ENCODE measurements at regions of chr4 and their contacts with region 1.

Region 1: GRCh38 chr4:87543835-87544461 is 14.8 kb upstream of the SPARCL1 start:
- DNase-seq: peak; percentile 32
- H3K4me3 ChIP-seq: no peak overlapping the region
- H3K27ac ChIP-seq: no peak overlapping the region
- H3K4me1 ChIP-seq: no peaks in the 10 kb centered on the region
- H3K27me3 ChIP-seq: no peaks in the 10 kb centered on the region
- CTCF ChIP-seq: peak in 3 of 4 experiments; percentile 44 to 62 (median 60)
- POLR2A ChIP-seq: no peak

Region 2: GRCh38 chr4:87375719-87376291 is 168.1 kb before region 1 on chr4:
- intact Hi-C with region 1: loop called (anchors 5 kb)
- DNase-seq: peak; percentile 42
- H3K4me3 ChIP-seq: no peak overlapping the region
- H3K27ac ChIP-seq: no peak overlapping the region
- H3K4me1 ChIP-seq: no peaks in the 10 kb centered on the region
- H3K27me3 ChIP-seq: no peaks in the 10 kb centered on the region
- CTCF ChIP-seq: peak in 3 of 4 experiments; percentile 62 to 76 (median 73)
- POLR2A ChIP-seq: no peak

Region 3: GRCh38 chr4:87430038-87430437 is 113.9 kb before region 1 on chr4:
- intact Hi-C with region 1: no loop called
- DNase-seq: no peak
- H3K4me3 ChIP-seq: no peak overlapping the region
- H3K27ac ChIP-seq: no peak overlapping the region
- H3K4me1 ChIP-seq: peaks cover 5% of the 10 kb centered on the region
- H3K27me3 ChIP-seq: no peaks in the 10 kb centered on the region
- CTCF ChIP-seq: no peak
- POLR2A ChIP-seq: no peak

Region 4: DNA sequence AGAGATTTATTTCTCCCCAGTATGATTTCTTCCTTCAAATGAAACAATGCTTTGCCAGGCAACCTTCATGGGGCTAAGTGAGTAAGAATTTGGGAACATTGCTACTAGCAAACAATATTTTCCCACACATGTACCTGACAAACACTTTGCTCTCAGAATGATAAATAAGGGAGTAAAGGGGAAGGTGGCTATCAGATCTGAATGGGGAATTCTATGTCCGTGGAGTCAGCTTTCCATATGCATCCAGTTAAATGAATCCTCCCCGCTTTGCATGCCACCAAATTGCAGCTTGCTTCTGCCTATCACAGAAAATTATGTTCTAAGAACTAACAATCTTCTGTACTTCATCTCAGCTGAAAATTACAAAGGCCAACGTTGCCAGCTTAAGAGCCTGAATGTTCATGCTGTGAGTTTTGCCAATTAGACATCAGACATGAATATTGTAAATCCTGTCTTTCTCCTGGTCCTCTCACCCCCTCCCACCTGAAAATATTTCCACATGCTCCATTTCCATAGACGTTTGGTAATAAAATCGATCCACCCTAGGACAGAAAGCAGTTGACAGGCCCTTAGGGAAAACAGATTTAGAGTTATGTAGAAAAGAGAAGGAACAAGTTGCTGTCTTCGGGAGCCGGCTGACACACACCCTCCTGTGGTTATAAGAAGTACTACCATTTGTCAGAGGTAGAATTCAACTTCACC is 295.1 kb after region 1 on chr4:
- intact Hi-C with region 1: loop called (anchors 2 kb)
- DNase-seq: no peak
- H3K4me3 ChIP-seq: no peak overlapping the region
- H3K27ac ChIP-seq: no peak overlapping the region
- H3K4me1 ChIP-seq: no peaks in the 10 kb centered on the region
- H3K27me3 ChIP-seq: no peaks in the 10 kb centered on the region
- CTCF ChIP-seq: peak; percentile 51 to 66 (median 58)
- POLR2A ChIP-seq: no peak

Region 5: DNA sequence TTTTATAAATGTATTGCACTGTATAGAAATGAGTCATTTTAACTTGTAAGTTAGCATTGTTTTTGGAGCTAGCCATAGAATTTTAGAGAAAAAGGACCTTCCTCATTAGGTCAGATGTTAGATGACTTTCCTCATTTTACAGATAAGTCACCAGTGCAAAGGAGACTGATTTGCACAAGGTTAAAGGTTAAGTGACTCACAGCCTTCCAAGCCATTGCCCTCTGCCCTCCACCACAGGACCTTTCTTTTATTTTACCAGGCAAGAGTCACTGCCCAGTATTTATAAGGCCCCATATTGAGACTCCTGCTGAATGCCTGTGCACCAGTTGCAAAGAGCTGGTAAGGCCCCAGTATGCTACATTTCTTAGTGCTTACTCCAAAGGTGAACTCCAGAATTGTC is 618.7 kb after region 1 on chr4:
- intact Hi-C with region 1: no loop called
- DNase-seq: no peak
- H3K4me3 ChIP-seq: no peak overlapping the region
- H3K27ac ChIP-seq: no peak overlapping the region
- H3K4me1 ChIP-seq: no peaks in the 10 kb centered on the region
- H3K27me3 ChIP-seq: peaks cover 2% of the 10 kb centered on the region
- CTCF ChIP-seq: no peak
- POLR2A ChIP-seq: no peak

Region 6: DNA sequence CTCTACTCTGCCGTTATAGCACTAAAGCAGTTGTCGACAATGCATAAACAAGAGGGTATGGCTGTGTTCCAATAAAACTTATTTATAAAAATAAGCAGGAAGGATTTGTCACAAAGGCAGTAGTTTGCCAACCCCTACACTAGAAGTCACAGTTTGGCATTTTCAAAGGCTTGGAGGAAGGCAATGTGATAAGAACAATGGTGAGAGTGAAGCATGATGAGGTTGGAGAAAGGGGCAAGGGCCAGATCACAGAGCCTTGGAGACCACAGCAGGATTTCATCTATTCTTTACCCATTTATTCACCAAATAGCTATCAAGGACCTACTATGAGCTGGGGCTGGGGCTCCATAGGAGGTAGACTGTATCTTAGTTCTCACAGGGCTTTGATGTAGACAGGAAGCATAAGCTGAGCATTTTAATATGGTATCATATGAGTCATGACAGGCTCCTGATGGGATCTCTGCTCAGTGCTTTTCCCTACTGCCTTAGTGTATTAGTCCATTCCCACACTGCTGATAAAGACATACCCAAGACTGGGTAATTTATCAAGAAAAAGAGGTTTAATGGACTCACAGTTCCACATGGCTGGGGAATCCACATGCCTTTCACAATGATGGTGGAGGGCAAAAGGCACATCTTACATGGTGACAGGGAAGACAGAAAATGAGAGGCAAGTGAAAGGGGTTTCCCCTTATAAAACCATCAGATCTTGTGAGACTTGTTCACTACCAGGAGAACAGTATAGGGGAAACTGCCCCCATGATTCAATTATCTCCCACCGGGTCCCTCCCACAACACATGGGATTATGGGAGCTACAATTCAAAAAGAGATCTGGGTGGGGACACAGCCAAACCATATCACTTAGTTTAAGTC is 681.5 kb after region 1 on chr4:
- intact Hi-C with region 1: loop called (anchors 10 kb)
- DNase-seq: no peak
- H3K4me3 ChIP-seq: no peak overlapping the region
- H3K27ac ChIP-seq: no peak overlapping the region
- H3K4me1 ChIP-seq: no peaks in the 10 kb centered on the region
- H3K27me3 ChIP-seq: no peaks in the 10 kb centered on the region
- CTCF ChIP-seq: no peak
- POLR2A ChIP-seq: no peak